ENCODE measurements at regions of chr5 and their contacts with region 1.

Region 1: DNA sequence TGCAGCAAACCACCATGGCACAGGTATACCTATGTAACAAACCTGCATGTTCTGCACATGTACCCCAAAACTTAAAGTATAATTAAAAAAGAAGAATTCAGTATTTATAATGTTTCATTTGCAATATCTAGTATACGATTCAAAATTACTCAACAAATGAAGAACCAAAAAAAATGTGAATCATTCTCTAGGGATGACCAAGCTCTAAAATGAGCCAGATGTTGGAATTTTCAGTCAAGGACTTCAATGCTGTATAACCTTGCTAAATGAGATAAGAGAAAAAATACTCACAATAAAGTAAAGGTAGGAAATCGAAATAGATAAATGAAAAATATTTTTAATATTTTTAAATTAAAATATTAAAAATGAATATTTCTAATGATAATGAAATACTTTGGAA is 108.7 kb upstream of the ADRA1B start:
- DNase-seq: no peak
- ATAC-seq: no peak
- H3K4me3 ChIP-seq: no peak overlapping the region
- H3K27ac ChIP-seq: no peak overlapping the region
- H3K4me1 ChIP-seq: no peaks in the 10 kb centered on the region
- H3K27me3 ChIP-seq: no peaks in the 10 kb centered on the region
- CTCF ChIP-seq: no peak

Region 2: DNA sequence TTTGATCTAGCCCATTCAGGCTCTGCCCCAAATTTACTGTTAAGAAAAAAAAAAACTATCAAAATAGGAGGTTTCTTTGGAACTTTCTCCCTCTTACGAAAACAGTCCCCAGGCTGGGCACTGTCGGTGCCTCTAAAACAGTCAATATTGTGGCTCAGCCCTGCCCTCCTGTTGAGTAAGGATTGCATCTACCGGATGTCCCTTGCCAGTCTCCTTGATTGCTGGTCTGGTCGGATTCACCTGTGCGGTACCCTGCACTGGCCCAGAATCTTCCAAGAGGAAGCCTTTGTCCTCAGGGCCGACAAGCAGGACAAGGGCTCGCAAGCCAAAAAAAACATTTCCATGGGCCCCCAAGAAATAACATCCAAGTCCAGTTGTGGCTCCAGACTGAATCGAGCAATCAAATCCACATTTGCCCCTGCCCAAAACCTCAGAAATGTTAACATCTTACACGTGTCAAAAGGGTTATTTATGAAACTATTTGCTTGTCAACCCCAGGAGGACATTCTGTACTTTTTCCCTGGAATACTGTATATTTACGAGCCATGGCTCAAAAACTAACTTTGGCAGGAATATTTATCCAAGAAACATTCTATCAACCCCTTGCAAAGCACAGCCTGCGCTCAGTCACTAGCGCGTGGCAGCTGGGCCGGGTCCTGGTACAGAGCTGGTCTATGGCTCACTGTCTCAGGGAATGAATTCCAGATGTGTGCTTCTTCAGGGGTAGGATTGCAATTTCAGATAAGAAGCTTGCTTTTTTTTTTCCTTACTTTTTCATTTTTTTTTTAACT is 20.5 kb before region 1 on chr5:
- CTCF ChIA-PET with region 1: no interaction called
- POLR2A ChIA-PET with region 1: interaction called, 10 read pairs
- intact Hi-C with region 1: no loop called
- DNase-seq: no peak
- ATAC-seq: no peak
- H3K4me3 ChIP-seq: no peak overlapping the region
- H3K27ac ChIP-seq: no peak overlapping the region
- H3K4me1 ChIP-seq: 0 out of 2 replicates have a peak, but pooled peaks cover 4% of the 10 kb centered on the region
- H3K27me3 ChIP-seq: no peaks in the 10 kb centered on the region
- CTCF ChIP-seq: no peak

Measured in PC-3 (cell line).